WTC11 (cell line): ENCODE measurements at regions of chr6 and their contacts with region 1.

Region 1: GRCh38 chr6:160766989-160767660 is 65.1 kb downstream of the PLG start:
- DNase-seq: peak; percentile 81
- ATAC-seq: peak; percentile 87
- H3K4me3 Mint-ChIP-seq: peak overlapping the region; percentile 84
- H3K27ac Mint-ChIP-seq: no peak overlapping the region
- H3K4me1 Mint-ChIP-seq: peaks cover 8% of the 10 kb centered on the region
- H3K27me3 Mint-ChIP-seq: peaks cover 21% of the 10 kb centered on the region
- CTCF ChIP-seq: peak; percentile 65

Region 2: GRCh38 chr6:160750276-160750689 is 16.8 kb before region 1 on chr6:
- CTCF ChIA-PET with region 1: interaction called, 34 read pairs
- POLR2A ChIA-PET with region 1: no interaction called
- DNase-seq: peak; percentile 74
- ATAC-seq: peak; percentile 95
- H3K4me3 Mint-ChIP-seq: peak overlapping the region; percentile 43; the same call in 1 of the 2 replicates
- H3K27ac Mint-ChIP-seq: no peak overlapping the region
- H3K4me1 Mint-ChIP-seq: peaks cover 13% of the 10 kb centered on the region
- H3K27me3 Mint-ChIP-seq: peaks cover 9% of the 10 kb centered on the region
- CTCF ChIP-seq: peak; percentile 66